H1 (cell line): ENCODE measurements at regions of chr11 and their contacts with region 1.

Region 1: GRCh38 chr11:2298795-2299761 is 2.6 kb downstream of the C11orf21 start:
- DNase-seq: peak; percentile 25 to 68
- H3K4me3 ChIP-seq: no peak overlapping the region
- H3K27ac ChIP-seq: no peak overlapping the region
- H3K4me1 ChIP-seq: no peaks in the 10 kb centered on the region
- H3K27me3 ChIP-seq: peaks cover 0 to 2% (median 0%) of the 10 kb centered on the region in 4 experiments; a peak in 1 of 7 replicates
- CTCF ChIP-seq: peak; percentile 77 to 87 (median 80)
- EP300 ChIP-seq: no peak
- POLR2A ChIP-seq: no peak
- RAD21 ChIP-seq: peak; percentile 92

Region 2: DNA sequence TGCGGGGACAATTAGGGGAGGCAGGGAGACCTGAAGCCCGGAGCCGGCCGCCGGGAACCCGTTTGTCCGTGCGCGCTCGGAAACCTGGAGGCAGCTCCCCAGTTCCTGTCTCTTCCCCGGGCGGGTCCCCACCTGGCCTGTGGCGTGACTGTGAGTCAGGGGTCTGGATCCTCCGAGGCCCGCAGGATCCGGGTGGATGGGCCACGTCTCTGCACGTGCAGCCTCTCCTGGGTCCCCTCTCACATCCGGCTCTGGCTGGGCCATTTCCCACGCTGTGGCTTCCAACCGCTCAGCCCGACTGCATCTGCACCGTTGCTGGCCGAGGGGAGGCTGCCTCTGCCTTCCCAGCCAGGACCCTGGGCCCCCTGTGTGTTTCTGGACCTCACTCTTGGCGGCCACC is 286.6 kb before region 1 on chr11:
- CTCF ChIA-PET with region 1: no interaction called
- POLR2A ChIA-PET with region 1: no interaction called
- DNase-seq: no peak
- H3K4me3 ChIP-seq: no peak overlapping the region
- H3K27ac ChIP-seq: no peak overlapping the region
- H3K4me1 ChIP-seq: no peaks in the 10 kb centered on the region
- H3K27me3 ChIP-seq: no peaks in the 10 kb centered on the region
- CTCF ChIP-seq: no peak
- EP300 ChIP-seq: no peak
- POLR2A ChIP-seq: no peak
- RAD21 ChIP-seq: no peak

Region 3: DNA sequence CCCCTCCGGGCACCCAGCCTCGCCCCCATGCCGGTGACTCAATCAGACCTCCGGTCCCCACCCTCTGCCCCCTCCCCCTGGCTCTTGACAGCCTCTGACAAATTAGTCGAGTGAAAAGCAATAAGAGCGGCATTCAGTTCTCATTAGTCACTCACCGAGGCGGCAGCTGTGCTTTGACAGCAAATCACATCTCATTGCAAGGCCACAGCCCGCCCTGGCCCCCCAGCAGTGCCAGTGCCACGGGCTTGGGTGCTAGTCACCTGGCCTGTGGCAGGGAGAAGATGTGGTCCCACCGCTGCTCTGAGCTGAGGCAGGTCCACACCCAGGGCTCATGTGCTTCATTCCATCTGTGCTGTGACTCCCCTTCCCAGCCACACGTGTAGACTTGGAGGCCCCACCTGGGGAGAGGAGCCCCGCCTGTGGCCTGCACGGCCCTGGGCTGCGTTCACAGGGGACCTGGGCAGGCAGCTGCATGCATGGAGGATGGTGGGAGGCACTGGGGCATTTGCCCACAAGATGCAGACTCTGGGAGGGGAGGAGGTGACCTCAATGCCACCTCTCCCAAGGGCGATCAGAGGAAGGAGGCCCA is 120.1 kb before region 1 on chr11:
- CTCF ChIA-PET with region 1: interaction called, 11 read pairs
- POLR2A ChIA-PET with region 1: no interaction called
- DNase-seq: no peak
- H3K4me3 ChIP-seq: no peak overlapping the region
- H3K27ac ChIP-seq: no peak overlapping the region
- H3K4me1 ChIP-seq: no peaks in the 10 kb centered on the region
- H3K27me3 ChIP-seq: no peaks in the 10 kb centered on the region
- CTCF ChIP-seq: no peak
- EP300 ChIP-seq: no peak
- POLR2A ChIP-seq: no peak
- RAD21 ChIP-seq: no peak

Region 4: DNA sequence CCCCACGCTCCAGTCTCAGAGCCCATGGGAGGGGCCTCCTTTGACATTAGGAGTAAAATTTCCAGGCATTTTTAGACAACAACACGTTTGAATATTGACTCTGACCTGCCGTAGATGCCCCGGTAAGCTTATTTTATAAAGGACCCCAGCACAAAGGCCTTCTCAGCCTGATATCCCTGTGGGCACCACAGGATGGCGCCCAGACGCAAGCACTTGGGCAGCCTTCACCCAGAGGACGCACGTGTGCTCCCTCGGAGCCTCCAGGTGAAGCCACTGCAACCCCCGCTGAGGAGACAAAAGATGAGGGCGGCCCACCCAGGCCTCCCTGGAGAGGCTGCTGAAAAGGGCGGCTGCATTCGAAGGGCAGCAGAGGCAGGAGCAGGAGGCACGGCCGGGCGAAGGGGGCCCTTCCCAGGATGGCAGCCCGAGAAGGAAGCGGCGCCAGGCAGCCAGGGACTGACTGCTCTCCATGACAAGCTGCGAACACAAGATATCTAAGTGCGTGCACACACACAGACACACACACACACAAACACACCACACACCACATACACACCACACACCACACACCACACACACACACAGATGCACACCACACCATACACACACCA is 112.3 kb before region 1 on chr11:
- CTCF ChIA-PET with region 1: interaction called, 116 read pairs
- POLR2A ChIA-PET with region 1: no interaction called
- DNase-seq: peak in 1 of 2 experiments; percentile 69
- H3K4me3 ChIP-seq: no peak overlapping the region
- H3K27ac ChIP-seq: no peak overlapping the region
- H3K4me1 ChIP-seq: no peaks in the 10 kb centered on the region; a peak in 2 of 7 replicates
- H3K27me3 ChIP-seq: peaks cover 0 to 16% (median 5%) of the 10 kb centered on the region in 4 experiments; a peak in 2 of 7 replicates
- CTCF ChIP-seq: peak; percentile 66 to 75 (median 69)
- EP300 ChIP-seq: no peak
- POLR2A ChIP-seq: no peak
- RAD21 ChIP-seq: peak; percentile 62 to 77

Region 5: DNA sequence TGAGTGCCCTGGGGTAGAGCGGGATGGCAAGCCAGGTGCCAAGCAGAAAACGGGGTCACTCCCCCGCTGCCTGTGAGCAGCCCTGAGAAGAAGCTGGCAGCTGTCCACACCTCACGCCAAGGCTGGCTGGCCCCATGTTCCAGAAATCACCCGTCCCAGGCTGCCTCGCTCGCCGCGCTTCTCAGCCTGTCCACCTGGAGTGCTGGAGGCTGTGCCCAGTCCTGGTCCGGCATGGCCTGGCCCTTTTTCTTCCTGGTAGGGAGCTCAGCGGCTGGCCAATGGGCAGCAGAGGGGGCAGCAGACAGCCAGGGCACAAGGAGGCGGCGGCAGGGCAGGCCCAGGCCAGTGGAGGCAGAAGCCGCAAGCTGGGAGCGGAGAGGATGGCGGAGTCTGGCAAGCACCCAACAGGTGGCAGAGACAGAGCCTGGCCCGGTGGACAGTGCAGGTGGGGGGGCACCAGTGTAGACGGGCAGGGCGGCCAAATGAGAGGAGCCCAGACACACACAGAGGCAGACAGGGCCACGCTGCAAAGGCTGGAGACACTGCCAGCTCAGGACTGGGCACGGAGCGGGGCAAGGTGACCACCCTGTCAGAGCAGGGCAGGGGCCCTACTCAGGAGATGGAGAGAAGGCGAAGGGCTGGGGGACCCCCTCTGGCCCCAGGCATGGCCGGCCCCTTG is 90.2 kb before region 1 on chr11:
- CTCF ChIA-PET with region 1: interaction called, 248 read pairs
- POLR2A ChIA-PET with region 1: no interaction called
- DNase-seq: peak in 1 of 2 experiments; percentile 48
- H3K4me3 ChIP-seq: no peak overlapping the region
- H3K27ac ChIP-seq: no peak overlapping the region
- H3K4me1 ChIP-seq: peaks cover 5 to 11% (median 8%) of the 10 kb centered on the region in 4 experiments
- H3K27me3 ChIP-seq: peaks cover 0 to 6% (median 1%) of the 10 kb centered on the region in 4 experiments; a peak in 4 of 7 replicates
- CTCF ChIP-seq: peak; percentile 25 to 48 (median 47)
- EP300 ChIP-seq: no peak
- POLR2A ChIP-seq: no peak
- RAD21 ChIP-seq: peak; percentile 45 to 52

Region 6: GRCh38 chr11:2277008-2277346 is 22.1 kb before region 1 on chr11:
- CTCF ChIA-PET with region 1: interaction called, 11 read pairs
- POLR2A ChIA-PET with region 1: no interaction called
- DNase-seq: peak in 1 of 2 experiments; percentile 43
- H3K4me3 ChIP-seq: no peak overlapping the region
- H3K27ac ChIP-seq: no peak overlapping the region
- H3K4me1 ChIP-seq: peaks cover 0 to 8% (median 1%) of the 10 kb centered on the region in 4 experiments; a peak in 3 of 7 replicates
- H3K27me3 ChIP-seq: peaks cover 0 to 25% (median 21%) of the 10 kb centered on the region in 4 experiments; a peak in 6 of 7 replicates
- CTCF ChIP-seq: no peak
- EP300 ChIP-seq: no peak
- POLR2A ChIP-seq: no peak
- RAD21 ChIP-seq: no peak

Region 7: DNA sequence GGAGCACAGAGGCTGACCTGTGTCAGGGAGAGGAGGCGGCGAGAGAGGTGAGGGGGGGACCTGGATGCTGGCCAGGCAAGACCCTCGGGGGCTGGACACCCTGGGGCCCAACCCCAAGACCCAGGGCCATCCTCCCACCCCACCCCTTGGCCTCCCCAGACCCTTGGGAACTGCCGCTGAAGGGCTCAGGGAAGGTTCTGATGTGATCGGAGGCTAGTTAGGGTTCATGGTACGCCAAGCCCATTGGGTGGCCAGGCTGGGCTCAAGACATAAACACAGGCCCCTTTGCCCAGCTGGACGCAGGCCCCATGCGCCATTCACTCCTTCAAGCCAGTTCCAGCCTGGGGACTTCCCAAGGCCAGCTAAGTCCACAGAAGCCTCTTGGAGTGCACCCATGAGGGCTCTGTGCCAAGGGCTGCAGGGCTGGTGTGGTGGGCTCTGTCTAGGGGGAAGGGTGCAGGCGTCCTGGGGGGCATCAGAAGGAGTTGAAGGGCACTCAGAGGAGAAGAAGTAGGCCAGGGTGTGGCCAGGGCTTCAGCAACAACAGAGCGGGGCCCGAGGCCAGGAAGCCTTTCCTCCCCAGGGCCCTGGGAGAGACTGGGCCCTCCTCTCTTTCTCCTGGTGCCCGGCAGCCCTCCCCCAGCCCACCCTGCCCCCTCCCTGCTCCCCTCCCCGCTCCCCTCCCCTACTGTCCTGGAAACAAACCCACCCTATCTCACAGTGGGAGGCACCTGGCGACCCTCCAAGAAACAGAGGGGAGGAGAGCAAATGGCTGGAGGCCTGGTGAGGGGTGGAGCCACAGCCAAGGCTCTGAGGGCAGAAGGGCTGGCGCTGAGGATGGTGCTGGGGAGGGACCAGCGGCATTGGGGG is 15.7 kb after region 1 on chr11:
- CTCF ChIA-PET with region 1: interaction called, 30 read pairs
- POLR2A ChIA-PET with region 1: no interaction called
- DNase-seq: no peak
- H3K4me3 ChIP-seq: no peak overlapping the region
- H3K27ac ChIP-seq: no peak overlapping the region
- H3K4me1 ChIP-seq: no peaks in the 10 kb centered on the region
- H3K27me3 ChIP-seq: peaks cover 0 to 1% (median 0%) of the 10 kb centered on the region in 4 experiments; a peak in 1 of 7 replicates
- CTCF ChIP-seq: no peak
- EP300 ChIP-seq: no peak
- POLR2A ChIP-seq: no peak
- RAD21 ChIP-seq: no peak

Region 8: DNA sequence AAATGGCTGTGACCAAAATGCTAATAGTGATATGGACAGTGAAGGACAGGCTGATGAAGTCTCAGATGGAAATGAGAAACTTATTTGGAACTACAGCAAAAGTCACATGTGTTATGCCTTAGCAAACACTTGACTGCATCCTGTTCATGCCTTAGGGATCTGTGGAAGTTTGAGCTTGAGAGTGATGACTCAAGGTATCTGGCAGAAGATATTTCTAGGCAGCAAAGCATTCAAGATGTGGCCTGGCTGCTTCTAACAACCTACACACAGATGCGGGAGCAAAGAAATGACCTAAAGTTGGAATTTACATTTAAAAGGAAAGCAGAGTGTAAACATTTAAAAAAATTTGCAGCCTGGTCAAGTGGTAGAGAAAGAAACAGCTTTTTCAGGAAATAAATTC is 49.9 kb after region 1 on chr11:
- CTCF ChIA-PET with region 1: no interaction called
- POLR2A ChIA-PET with region 1: no interaction called
- DNase-seq: no peak
- H3K4me3 ChIP-seq: no peak overlapping the region
- H3K27ac ChIP-seq: no peak overlapping the region
- H3K4me1 ChIP-seq: no peaks in the 10 kb centered on the region
- H3K27me3 ChIP-seq: no peaks in the 10 kb centered on the region
- CTCF ChIP-seq: no peak
- EP300 ChIP-seq: no peak
- POLR2A ChIP-seq: no peak
- RAD21 ChIP-seq: no peak